Kidney (tissue), 22 donors: ENCODE measurements at regions of chr14 and their contacts with region 1.

Region 1: DNA sequence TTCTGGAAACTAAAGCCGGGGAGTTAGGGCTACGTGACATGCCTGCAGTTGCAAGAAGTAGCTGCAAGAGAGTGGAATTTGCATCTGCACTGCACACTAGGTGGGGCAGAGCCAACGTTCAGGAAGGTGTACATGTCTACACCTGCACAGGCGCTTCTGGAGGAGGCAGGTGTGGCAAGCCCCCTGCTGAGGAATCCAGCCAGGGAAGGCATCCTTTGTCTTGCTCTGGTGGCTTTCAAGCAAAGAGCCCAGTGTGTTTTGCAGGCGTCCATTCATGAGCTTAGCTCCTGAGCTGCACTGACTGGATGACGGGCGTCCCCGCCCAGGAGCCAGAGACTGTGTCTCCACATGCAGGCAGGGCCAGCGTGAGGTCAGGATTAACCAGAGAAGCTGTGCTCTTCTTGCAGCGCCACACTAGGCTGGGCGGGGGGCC is 116.3 kb downstream of the ZFP36L1 start:
- DNase-seq: peak in 2 of 5 donors; percentile 48 to 51
- H3K4me3 ChIP-seq: no peak overlapping the region
- H3K27ac ChIP-seq: no peak overlapping the region
- H3K4me1 ChIP-seq: peaks cover 4 to 24% (median 13%) of the 10 kb centered on the region in 3 donors
- H3K27me3 ChIP-seq: no peaks in the 10 kb centered on the region
- CTCF ChIP-seq: no peak

Region 2: GRCh38 chr14:68788996-68789820 is 112.7 kb after region 1 on chr14:
- intact Hi-C with region 1: loop called (anchors 10 kb)
- DNase-seq: peak; percentile 90 to 95 (median 92)
- H3K4me3 ChIP-seq: peak overlapping the region; percentile 89 to 100 (median 99)
- H3K27ac ChIP-seq: peak overlapping the region; percentile 98 to 100
- H3K4me1 ChIP-seq: peaks cover 4 to 38% (median 29%) of the 10 kb centered on the region in 3 donors
- H3K27me3 ChIP-seq: no peaks in the 10 kb centered on the region
- CTCF ChIP-seq: peak; percentile 69

Region 3: GRCh38 chr14:68807148-68807600 is 130.6 kb after region 1 on chr14:
- intact Hi-C with region 1: no loop called
- DNase-seq: peak in 4 of 5 donors; percentile 63 to 91 (median 82)
- H3K4me3 ChIP-seq: no peak overlapping the region
- H3K27ac ChIP-seq: peak overlapping the region in 1 of 2 donors; percentile 78
- H3K4me1 ChIP-seq: peaks cover 0 to 16% (median 13%) of the 10 kb centered on the region in 3 donors
- H3K27me3 ChIP-seq: no peaks in the 10 kb centered on the region
- CTCF ChIP-seq: no peak